Endothelial cell of umbilical vein (primary cell): ENCODE measurements at regions of chr11 and their contacts with region 1.

Region 1: GRCh38 chr11:57249384-57250319 is 12.6 kb upstream of the APLNR start:
- DNase-seq: peak; percentile 76
- H3K4me3 ChIP-seq: no peak overlapping the region
- H3K27ac ChIP-seq: no peak overlapping the region
- H3K4me1 ChIP-seq: peaks cover 6% of the 10 kb centered on the region
- H3K27me3 ChIP-seq: peaks cover 5 to 9% of the 10 kb centered on the region in 2 experiments
- CTCF ChIP-seq: peak; percentile 77 to 78
- POLR2A ChIP-seq: no peak

Region 2: GRCh38 chr11:57001674-57002401 is 247.8 kb before region 1 on chr11:
- CTCF ChIA-PET with region 1: interaction called, 17 read pairs
- POLR2A ChIA-PET with region 1: no interaction called
- dilution Hi-C with region 1: no loop called
- intact Hi-C with region 1: loop called (anchors 1 kb)
- DNase-seq: peak; percentile 2
- H3K4me3 ChIP-seq: no peak overlapping the region
- H3K27ac ChIP-seq: no peak overlapping the region
- H3K4me1 ChIP-seq: no peaks in the 10 kb centered on the region
- H3K27me3 ChIP-seq: no peaks in the 10 kb centered on the region
- CTCF ChIP-seq: peak; percentile 17 to 45
- POLR2A ChIP-seq: no peak

Region 3: DNA sequence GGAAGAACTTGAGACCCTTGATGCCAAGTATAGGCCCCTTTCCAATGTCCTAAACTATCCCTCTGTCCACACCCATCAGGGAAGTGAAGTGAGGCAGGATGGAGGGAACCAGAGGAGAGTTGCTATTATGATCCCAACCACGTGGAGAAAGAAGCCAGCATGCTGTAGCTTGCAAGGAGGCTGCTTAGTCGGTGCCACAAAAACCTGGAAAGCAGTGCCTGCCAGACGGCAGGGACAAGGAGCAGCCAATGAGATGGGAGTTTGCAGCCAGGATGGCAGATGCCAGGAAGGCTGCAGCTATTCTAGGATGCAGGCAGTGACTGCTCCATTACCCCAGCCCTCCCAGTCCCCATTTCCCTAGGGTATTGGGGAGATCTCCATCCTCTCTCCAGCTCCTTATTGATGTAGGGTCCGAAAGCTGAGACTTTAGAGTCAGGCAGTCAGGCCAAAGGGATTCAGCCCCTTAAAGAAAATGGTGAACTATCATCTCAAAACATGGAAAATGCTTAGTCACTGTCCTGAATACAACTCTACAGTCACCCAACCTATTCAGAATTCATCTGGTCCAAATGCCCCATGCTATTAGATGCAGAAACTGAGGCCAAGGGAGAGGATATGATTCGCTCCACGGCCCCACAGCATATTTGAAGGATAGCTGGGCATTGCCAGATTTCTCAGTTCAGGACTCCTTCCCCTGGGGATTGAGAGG is 86.3 kb before region 1 on chr11:
- CTCF ChIA-PET with region 1: interaction called, 12 read pairs
- POLR2A ChIA-PET with region 1: no interaction called
- dilution Hi-C with region 1: no loop called
- intact Hi-C with region 1: no loop called
- DNase-seq: no peak
- H3K4me3 ChIP-seq: no peak overlapping the region
- H3K27ac ChIP-seq: no peak overlapping the region
- H3K4me1 ChIP-seq: no peaks in the 10 kb centered on the region
- H3K27me3 ChIP-seq: peaks cover 0 to 4% of the 10 kb centered on the region in 2 experiments
- CTCF ChIP-seq: no peak
- POLR2A ChIP-seq: no peak

Region 4: GRCh38 chr11:57213342-57214095 is 36.1 kb before region 1 on chr11:
- CTCF ChIA-PET with region 1: interaction called, 23 read pairs
- POLR2A ChIA-PET with region 1: interaction called, 8 read pairs
- dilution Hi-C with region 1: no loop called
- intact Hi-C with region 1: no loop called
- DNase-seq: peak; percentile 87
- H3K4me3 ChIP-seq: peak overlapping the region in 1 of 3 experiments; percentile 15
- H3K27ac ChIP-seq: peak overlapping the region; percentile 49
- H3K4me1 ChIP-seq: peaks cover 16% of the 10 kb centered on the region
- H3K27me3 ChIP-seq: no peaks in the 10 kb centered on the region
- CTCF ChIP-seq: no peak
- POLR2A ChIP-seq: no peak

Region 5: DNA sequence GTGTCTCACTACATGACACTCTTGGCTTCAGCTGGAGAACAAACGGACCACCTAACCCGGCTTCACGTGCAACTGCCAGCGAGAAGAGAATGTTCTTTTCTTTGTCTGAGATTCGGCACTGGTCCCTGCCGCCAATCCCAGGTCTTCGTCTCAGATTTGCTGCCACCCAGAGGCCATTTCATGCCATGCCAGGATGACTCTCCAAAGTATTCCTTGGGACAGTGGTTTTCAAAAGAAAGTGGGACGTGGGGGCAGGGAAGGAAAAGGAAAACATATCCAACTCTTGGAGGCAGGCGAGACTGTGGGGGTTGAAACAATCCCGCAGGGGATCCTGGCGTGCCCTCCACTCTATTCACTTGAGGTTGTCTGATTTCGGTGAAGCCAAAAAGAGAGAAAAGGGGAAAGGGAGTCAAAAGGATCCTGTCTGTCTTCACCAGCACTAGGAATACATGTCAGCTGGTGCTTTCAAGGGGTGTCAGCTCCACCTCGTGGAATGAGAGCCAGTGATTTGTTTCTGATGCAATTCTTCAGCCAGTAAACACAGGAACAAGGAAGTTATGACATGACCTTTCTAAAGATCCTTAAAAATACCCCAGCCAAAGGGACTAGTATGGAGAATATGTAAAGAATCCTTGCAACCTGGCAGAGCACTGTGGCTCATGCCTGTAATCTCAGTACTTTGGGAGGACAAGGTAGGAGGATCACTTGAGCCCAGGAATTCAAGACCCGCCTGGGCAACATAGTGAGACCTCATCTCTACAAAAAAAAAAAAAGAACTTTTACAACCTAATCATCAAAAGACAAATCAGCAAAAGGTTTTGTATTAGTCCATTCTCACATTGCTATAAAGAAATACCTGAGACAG is 28.4 kb after region 1 on chr11:
- CTCF ChIA-PET with region 1: interaction called, 116 read pairs
- POLR2A ChIA-PET with region 1: no interaction called
- dilution Hi-C with region 1: no loop called
- intact Hi-C with region 1: loop called (anchors 1 kb)
- DNase-seq: peak; percentile 92
- H3K4me3 ChIP-seq: peak overlapping the region in 1 of 3 experiments; percentile 25
- H3K27ac ChIP-seq: peak overlapping the region; percentile 65
- H3K4me1 ChIP-seq: peaks cover 32% of the 10 kb centered on the region
- H3K27me3 ChIP-seq: no peaks in the 10 kb centered on the region
- CTCF ChIP-seq: peak; percentile 83 to 96
- POLR2A ChIP-seq: no peak

Region 6: DNA sequence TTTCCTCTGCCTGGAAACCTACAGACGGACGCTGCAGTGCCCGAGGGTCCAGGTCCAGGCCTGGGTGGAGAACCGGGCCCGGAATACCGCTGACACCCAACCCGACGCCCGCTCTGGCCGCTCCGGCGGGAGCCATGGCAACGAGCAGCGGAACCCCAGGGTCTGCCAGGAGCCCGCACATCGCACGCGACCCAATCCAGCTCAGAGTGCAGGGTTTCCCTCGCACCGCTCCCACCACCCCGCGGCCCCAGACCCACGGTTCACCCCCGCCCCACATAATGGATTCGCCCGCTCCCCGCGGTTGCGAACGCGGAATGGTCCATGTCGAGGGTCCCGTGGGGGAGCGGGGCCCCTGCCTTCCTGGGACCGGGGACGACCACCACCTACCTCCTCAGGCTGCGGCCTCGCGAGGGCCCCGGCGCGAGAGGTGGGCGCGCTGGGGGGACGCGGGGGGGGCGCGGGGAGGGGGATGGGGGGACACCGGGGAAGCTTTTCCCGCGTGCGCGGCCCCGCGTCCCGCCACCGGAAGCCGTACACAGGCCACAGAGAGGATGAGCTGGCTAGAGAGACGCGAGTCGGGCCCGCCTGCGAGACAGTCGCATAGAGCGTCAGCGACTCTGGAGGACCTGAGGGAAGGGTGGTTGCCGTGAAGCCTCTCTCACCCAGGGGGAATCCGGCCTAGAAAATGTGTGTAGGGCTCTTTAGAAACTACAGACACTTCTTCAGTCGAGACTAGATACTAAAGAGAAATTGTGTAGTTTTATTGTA is 85.9 kb after region 1 on chr11 and contains the start of gene SSRP1:
- CTCF ChIA-PET with region 1: interaction called, 12 read pairs
- POLR2A ChIA-PET with region 1: no interaction called
- dilution Hi-C with region 1: no loop called
- intact Hi-C with region 1: no loop called
- DNase-seq: peak; percentile 77
- H3K4me3 ChIP-seq: peak within 1 kb of the TSS; percentile 58 to 82 (median 61)
- H3K27ac ChIP-seq: peak within 1 kb of the TSS; percentile 54
- H3K4me1 ChIP-seq: peaks cover 17% of the 10 kb centered on the region
- H3K27me3 ChIP-seq: peaks cover 4 to 9% of the 10 kb centered on the region in 2 experiments
- CTCF ChIP-seq: no peak
- POLR2A ChIP-seq: peak; percentile 82
- total RNA-seq, gene SSRP1: 140 and 146 TPM in 2 replicates